HepG2 (cell line): ENCODE measurements at regions of chr10 and their contacts with region 1.

Region 1: DNA sequence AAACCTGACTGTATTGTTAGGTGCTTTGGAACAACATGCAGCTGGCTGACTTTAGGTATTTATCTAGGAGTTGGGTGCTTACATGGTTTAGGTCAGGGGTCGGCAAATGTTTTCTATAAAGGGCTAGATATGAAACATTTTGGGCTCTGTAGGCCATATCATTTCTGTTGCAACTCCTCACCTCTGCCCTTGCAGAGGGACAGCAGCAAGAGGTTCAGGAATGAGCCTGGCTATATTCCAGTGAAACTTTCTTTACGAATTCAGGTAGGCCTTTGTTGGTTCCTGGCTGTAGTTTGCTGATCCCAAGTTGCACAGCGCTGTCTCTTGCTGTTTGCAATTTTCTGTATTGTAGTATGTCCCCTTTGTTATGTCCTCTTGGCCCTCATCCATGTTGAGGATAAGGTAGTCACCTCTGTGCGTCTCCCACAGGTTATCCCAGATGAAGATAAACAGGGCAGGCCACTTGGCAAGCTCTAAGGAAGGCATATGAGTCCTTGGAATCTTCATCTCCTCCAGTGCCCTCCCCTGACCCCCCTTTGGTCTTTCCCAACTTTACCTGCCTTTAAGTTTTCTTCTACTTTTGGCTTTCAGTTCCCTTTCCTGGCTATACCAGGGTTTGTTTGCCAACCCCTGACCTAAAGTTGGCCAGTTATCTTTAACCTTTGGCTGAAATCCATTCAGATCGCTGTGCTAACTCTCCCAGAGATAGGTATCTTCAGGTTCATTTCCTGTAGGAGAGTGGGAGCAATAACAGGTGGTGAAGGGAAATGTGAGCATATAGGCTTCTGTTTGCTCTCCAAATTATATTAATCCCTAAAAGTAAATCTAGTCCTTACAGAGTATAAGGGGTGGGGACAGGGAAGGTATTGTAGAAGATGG is 36.1 kb downstream of the SGPL1 start:
- DNase-seq: peak; percentile 91
- ATAC-seq: peak; percentile 95
- H3K4me3 ChIP-seq: peak overlapping the region in 1 of 3 experiments; percentile 24; a peak in 1 of 6 replicates
- H3K27ac ChIP-seq: peak overlapping the region; percentile 61
- H3K4me1 ChIP-seq: peaks cover 72% of the 10 kb centered on the region
- H3K27me3 ChIP-seq: no peaks in the 10 kb centered on the region
- CTCF ChIP-seq: no peak
- EP300 ChIP-seq: peak in 1 of 2 experiments; percentile 79; a peak in 1 of 4 replicates
- POLR2A ChIP-seq: no peak
- RAD21 ChIP-seq: no peak

Region 2: DNA sequence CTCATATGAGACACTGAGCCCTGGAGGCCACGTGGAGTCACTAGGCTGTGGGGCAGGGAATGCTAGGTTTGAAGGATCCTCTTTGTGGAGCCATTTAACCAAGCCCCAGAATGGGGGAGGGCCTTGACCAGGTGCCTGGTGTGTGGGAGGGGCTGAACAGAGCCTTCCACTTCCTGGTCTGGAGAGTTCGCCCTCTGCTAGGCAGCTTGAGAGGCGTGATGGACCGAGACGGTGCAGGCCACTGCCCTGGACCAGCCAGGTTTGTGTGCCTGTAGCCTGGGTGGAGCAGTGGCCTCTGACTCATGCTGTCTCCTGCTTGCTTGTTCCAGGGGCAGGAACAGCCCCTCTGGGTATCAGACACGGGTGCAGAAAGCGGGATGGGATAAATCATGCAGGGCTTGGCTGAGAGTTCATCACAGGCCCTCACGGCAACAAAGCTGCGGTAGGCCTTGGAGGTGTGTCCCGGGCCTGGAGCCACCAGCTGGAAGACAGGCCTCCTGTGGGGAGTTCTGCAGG is 152.1 kb before region 1 on chr10:
- CTCF ChIA-PET with region 1: no interaction called
- POLR2A ChIA-PET with region 1: no interaction called
- in situ Hi-C with region 1: no loop called
- intact Hi-C with region 1: no loop called
- DNase-seq: peak; percentile 9
- ATAC-seq: peak; percentile 63
- H3K4me3 ChIP-seq: no peak overlapping the region
- H3K27ac ChIP-seq: no peak overlapping the region
- H3K4me1 ChIP-seq: 0 out of 2 replicates have a peak, but pooled peaks cover 4% of the 10 kb centered on the region
- H3K27me3 ChIP-seq: no peaks in the 10 kb centered on the region; a peak in 1 of 5 replicates
- CTCF ChIP-seq: no peak
- EP300 ChIP-seq: no peak
- POLR2A ChIP-seq: no peak
- RAD21 ChIP-seq: no peak

Region 3: DNA sequence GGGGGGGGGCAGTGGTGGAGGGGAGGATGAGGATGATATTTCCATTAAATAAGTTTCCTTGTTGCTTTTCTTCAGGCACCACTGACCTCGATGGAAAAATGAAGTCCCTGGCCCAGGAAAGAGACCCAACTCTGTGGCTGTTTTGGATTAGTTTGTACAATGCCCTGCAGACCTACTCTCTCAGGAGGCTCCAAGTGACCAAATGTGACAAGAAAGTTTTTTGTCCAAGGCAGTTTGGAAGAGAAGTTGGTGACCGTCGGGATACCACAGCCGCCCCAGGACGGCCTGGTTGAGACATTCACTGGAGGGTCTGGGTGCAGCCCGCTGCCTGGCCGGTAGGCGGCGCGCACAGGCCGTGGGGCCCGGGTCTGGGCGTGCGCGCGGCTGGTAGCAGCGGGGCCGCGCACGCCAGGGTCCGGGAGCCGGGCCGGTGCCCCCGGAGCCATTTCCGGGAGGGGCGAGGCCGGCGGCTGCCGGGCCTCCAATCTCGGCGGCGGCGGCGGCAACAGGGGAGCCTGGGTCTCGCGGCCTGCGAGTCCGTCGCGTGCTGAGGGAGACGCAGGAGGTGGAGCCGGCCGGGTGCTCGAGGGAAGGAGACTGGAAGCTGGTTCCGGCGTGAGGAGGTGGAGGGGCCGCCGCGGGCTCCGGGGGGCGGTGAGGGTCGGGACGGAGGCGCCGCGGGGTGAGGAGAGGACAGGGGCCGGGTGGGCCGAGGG is 36.2 kb before region 1 on chr10 and contains the start of gene SGPL1:
- CTCF ChIA-PET with region 1: no interaction called
- POLR2A ChIA-PET with region 1: no interaction called
- in situ Hi-C with region 1: no loop called
- intact Hi-C with region 1: loop called (anchors 2 kb)
- DNase-seq: peak; percentile 63
- ATAC-seq: peak; percentile 85
- H3K4me3 ChIP-seq: peak within 1 kb of the TSS; percentile 78 to 92 (median 92)
- H3K27ac ChIP-seq: peak within 1 kb of the TSS; percentile 72
- H3K4me1 ChIP-seq: peaks cover 29% of the 10 kb centered on the region
- H3K27me3 ChIP-seq: no peaks in the 10 kb centered on the region; a peak in 1 of 5 replicates
- CTCF ChIP-seq: peak; percentile 89
- EP300 ChIP-seq: no peak
- POLR2A ChIP-seq: peak in 1 of 2 experiments; percentile 52; a peak in 2 of 4 replicates
- RAD21 ChIP-seq: peak; percentile 99
- total RNA-seq, gene SGPL1: 19.0 and 25.0 TPM in 2 replicates

Region 4: DNA sequence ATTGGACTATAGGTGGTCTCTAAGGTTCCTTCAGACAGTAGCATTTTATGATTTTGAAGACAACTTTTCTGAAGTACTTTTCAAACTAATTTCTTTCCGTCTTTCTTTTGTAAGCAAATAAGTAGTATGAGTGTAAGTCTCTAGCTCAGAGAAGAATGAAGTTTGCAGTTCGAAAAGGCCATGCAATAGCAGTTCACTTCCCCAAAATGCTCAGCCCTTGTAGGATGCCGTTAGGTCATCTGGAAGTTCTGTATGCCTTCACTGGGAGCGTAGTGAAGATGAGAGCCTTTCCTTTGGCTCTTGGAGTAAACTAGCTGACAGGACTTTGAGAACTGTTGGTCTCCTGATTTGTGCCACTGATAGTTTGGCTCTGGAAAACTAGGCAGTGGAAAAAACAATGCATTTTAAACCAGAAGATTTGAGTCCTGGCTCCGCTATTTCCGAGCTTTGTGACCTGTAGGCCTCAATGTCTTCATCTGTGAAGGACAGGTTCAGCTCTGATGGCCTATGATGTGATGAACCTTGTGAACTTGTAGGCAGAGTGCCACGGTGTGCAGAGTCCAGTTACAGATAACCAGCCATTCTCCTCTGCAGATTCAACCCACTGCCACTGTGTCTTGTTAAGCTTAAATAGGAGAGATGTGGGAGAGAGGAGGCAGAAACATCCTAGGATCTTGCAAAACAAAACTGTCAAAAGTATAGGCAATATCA is 17.2 kb before region 1 on chr10:
- CTCF ChIA-PET with region 1: no interaction called
- POLR2A ChIA-PET with region 1: no interaction called
- in situ Hi-C with region 1: no loop called
- intact Hi-C with region 1: loop called (anchors 2 kb)
- DNase-seq: peak; percentile 73
- ATAC-seq: peak; percentile 98
- H3K4me3 ChIP-seq: no peak overlapping the region
- H3K27ac ChIP-seq: peak overlapping the region; percentile 23
- H3K4me1 ChIP-seq: peaks cover 42% of the 10 kb centered on the region
- H3K27me3 ChIP-seq: no peaks in the 10 kb centered on the region
- CTCF ChIP-seq: no peak
- EP300 ChIP-seq: no peak
- POLR2A ChIP-seq: no peak
- RAD21 ChIP-seq: no peak